ENCODE measurements at regions of chr4 and their contacts with region 1.

Region 1: GRCh38 chr4:148842843-148843242 is 400.6 kb upstream of the NR3C2 start:
- DNase-seq: no peak
- H3K4me3 ChIP-seq: no peak overlapping the region
- H3K27ac ChIP-seq: no peak overlapping the region
- H3K4me1 ChIP-seq: no peaks in the 10 kb centered on the region
- H3K27me3 ChIP-seq: no peaks in the 10 kb centered on the region
- CTCF ChIP-seq: no peak
- POLR2A ChIP-seq: no peak

Region 2: GRCh38 chr4:148866666-148867065 is 23.8 kb after region 1 on chr4:
- intact Hi-C with region 1: loop called (anchors 1 kb)
- DNase-seq: no peak
- H3K4me3 ChIP-seq: no peak overlapping the region
- H3K27ac ChIP-seq: no peak overlapping the region
- H3K4me1 ChIP-seq: no peaks in the 10 kb centered on the region
- H3K27me3 ChIP-seq: no peaks in the 10 kb centered on the region
- CTCF ChIP-seq: no peak
- POLR2A ChIP-seq: no peak

Measured in breast epithelium (tissue), 4 donors.